Activated CD4-positive, alpha-beta T cell treated with anti-CD3 and anti-CD28 coated beads for 36 hours (primary cell): ENCODE measurements at regions of chr4 and their contacts with region 1.

Region 1: GRCh38 chr4:81494031-81494431 is 22.3 kb upstream of the RASGEF1B start:
- DNase-seq: no peak
- ATAC-seq: peak; percentile 59
- H3K4me3 Mint-ChIP-seq: peak overlapping the region; percentile 28
- H3K27ac Mint-ChIP-seq: peak overlapping the region; percentile 55
- H3K4me1 Mint-ChIP-seq: peaks cover 50% of the 10 kb centered on the region
- H3K27me3 Mint-ChIP-seq: no peaks in the 10 kb centered on the region

Region 2: GRCh38 chr4:81505004-81505598 is 11.1 kb after region 1 on chr4:
- CTCF ChIA-PET with region 1: interaction called, 5 read pairs
- POLR2A ChIA-PET with region 1: no interaction called
- intact Hi-C with region 1: loop called (anchors 1 kb)
- DNase-seq: peak; percentile 83
- ATAC-seq: peak; percentile 80
- H3K4me3 Mint-ChIP-seq: peak overlapping the region; percentile 18
- H3K27ac Mint-ChIP-seq: peak overlapping the region; percentile 35
- H3K4me1 Mint-ChIP-seq: peaks cover 40% of the 10 kb centered on the region
- H3K27me3 Mint-ChIP-seq: no peaks in the 10 kb centered on the region

Region 3: DNA sequence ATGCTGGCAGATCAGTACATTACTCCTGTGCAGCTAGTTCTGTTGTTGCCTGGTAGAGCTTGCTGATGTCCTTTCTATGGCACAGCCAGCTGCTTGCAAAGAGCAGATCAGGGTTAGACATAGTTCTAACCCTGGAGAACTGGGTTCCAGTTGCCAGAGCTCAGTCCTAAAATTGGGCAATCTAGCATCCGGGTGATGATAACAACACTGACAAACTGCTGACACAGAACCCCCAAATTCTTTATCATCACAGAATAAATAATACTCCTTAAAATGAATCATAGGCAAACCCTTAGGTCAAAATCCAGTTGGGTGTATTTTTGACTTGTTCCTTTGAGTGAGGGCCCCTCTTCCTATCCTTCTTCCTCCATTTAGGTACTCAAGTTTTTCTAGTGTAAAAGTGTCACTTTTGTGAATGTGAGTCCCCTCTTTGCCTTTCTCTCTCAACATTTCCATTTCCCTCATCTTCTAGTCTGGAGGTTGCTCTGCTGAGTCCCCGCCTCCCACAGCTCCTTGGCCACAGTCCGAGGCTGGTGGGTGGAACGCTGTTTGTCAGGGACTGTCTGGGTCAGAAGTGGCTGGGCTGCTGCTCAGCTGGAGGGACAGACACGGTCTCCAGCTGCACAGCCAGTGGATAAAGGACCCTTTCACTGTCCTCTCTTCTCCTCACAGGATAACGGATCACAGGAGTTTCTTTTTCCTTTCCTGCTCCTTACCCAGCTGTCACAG is 71.3 kb after region 1 on chr4:
- CTCF ChIA-PET with region 1: no interaction called
- POLR2A ChIA-PET with region 1: no interaction called
- intact Hi-C with region 1: loop called in 1 of 2 experiments (anchors 1 kb)
- DNase-seq: no peak
- ATAC-seq: no peak
- H3K4me3 Mint-ChIP-seq: no peak overlapping the region
- H3K27ac Mint-ChIP-seq: no peak overlapping the region
- H3K4me1 Mint-ChIP-seq: peaks cover 5% of the 10 kb centered on the region
- H3K27me3 Mint-ChIP-seq: no peaks in the 10 kb centered on the region

Region 4: GRCh38 chr4:81648576-81649275 is 154.7 kb after region 1 on chr4:
- CTCF ChIA-PET with region 1: no interaction called
- POLR2A ChIA-PET with region 1: no interaction called
- intact Hi-C with region 1: loop called in 1 of 2 experiments (anchors 1 kb)
- DNase-seq: peak; percentile 65
- ATAC-seq: peak; percentile 46
- H3K4me3 Mint-ChIP-seq: peak overlapping the region; percentile 26
- H3K27ac Mint-ChIP-seq: peak overlapping the region; percentile 26
- H3K4me1 Mint-ChIP-seq: peaks cover 60% of the 10 kb centered on the region
- H3K27me3 Mint-ChIP-seq: no peaks in the 10 kb centered on the region

Region 5: DNA sequence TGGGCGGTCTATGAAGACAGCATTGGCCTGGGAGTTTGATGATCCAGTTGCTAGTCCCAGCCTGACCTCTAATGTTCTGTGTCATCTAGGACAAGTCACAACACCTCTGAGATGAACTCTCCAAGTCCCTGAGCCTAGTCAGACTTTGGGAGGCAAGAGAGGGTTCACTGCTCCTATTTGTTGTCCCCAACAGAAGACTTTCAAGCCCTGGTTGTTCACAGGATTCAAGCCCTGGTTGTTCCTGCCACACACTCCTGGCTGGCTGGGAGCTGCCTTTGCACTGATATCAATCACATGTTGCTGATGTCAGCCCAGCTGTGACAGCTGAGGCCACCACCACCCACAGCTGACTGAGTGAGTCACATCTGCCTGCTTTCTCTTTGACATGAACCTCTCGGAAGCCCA is 230.9 kb after region 1 on chr4:
- CTCF ChIA-PET with region 1: no interaction called
- POLR2A ChIA-PET with region 1: no interaction called
- intact Hi-C with region 1: loop called in 1 of 2 experiments (anchors 1 kb)
- DNase-seq: peak; percentile 85
- ATAC-seq: peak; percentile 100
- H3K4me3 Mint-ChIP-seq: no peak overlapping the region
- H3K27ac Mint-ChIP-seq: no peak overlapping the region
- H3K4me1 Mint-ChIP-seq: peaks cover 17% of the 10 kb centered on the region
- H3K27me3 Mint-ChIP-seq: peaks cover 3% of the 10 kb centered on the region

Region 6: GRCh38 chr4:81827577-81828202 is 333.7 kb after region 1 on chr4:
- CTCF ChIA-PET with region 1: interaction called, 4 read pairs
- POLR2A ChIA-PET with region 1: no interaction called
- intact Hi-C with region 1: loop called in 1 of 2 experiments (anchors 2 kb)
- DNase-seq: peak; percentile 61
- ATAC-seq: peak; percentile 96
- H3K4me3 Mint-ChIP-seq: no peak overlapping the region
- H3K27ac Mint-ChIP-seq: peak overlapping the region; percentile 63
- H3K4me1 Mint-ChIP-seq: peaks cover 17% of the 10 kb centered on the region
- H3K27me3 Mint-ChIP-seq: peaks cover 10% of the 10 kb centered on the region

Region 7: GRCh38 chr4:83231620-83232076 is 1737.6 kb after region 1 on chr4:
- CTCF ChIA-PET with region 1: no interaction called
- POLR2A ChIA-PET with region 1: no interaction called
- intact Hi-C with region 1: loop called in 1 of 2 experiments (anchors 5 kb)
- DNase-seq: peak; percentile 51
- ATAC-seq: peak; percentile 71
- H3K4me3 Mint-ChIP-seq: no peak overlapping the region
- H3K27ac Mint-ChIP-seq: peak overlapping the region; percentile 51
- H3K4me1 Mint-ChIP-seq: peaks cover 45% of the 10 kb centered on the region
- H3K27me3 Mint-ChIP-seq: peaks cover 23% of the 10 kb centered on the region